Right cardiac atrium (tissue), 5 donors: ENCODE measurements at regions of chr6 and their contacts with region 1.

Region 1: GRCh38 chr6:137271245-137272183 is 52.3 kb upstream of the IFNGR1 start:
- DNase-seq: no peak
- ATAC-seq: peak; percentile 68 to 74
- H3K4me3 ChIP-seq: no peak overlapping the region
- H3K27ac ChIP-seq: no peak overlapping the region
- H3K4me1 ChIP-seq: no peaks in the 10 kb centered on the region
- H3K27me3 ChIP-seq: no peaks in the 10 kb centered on the region

Region 2: GRCh38 chr6:136051140-136051775 is 1220.3 kb before region 1 on chr6:
- intact Hi-C with region 1: no loop called
- DNase-seq: peak in 2 of 3 donors; percentile 19 to 58
- ATAC-seq: peak; percentile 59 to 84
- H3K4me3 ChIP-seq: peak overlapping the region; percentile 34
- H3K27ac ChIP-seq: peak overlapping the region; percentile 36
- H3K4me1 ChIP-seq: peaks cover 8% of the 10 kb centered on the region
- H3K27me3 ChIP-seq: no peaks in the 10 kb centered on the region

Region 3: GRCh38 chr6:137313928-137314855 is 42.7 kb after region 1 on chr6:
- intact Hi-C with region 1: loop called in 2 of 4 experiments (anchors 5 kb)
- DNase-seq: peak; percentile 76 to 91 (median 82)
- ATAC-seq: peak; percentile 88 to 95
- H3K4me3 ChIP-seq: peak overlapping the region; percentile 52
- H3K27ac ChIP-seq: no peak overlapping the region
- H3K4me1 ChIP-seq: peaks cover 5% of the 10 kb centered on the region
- H3K27me3 ChIP-seq: no peaks in the 10 kb centered on the region

Region 4: DNA sequence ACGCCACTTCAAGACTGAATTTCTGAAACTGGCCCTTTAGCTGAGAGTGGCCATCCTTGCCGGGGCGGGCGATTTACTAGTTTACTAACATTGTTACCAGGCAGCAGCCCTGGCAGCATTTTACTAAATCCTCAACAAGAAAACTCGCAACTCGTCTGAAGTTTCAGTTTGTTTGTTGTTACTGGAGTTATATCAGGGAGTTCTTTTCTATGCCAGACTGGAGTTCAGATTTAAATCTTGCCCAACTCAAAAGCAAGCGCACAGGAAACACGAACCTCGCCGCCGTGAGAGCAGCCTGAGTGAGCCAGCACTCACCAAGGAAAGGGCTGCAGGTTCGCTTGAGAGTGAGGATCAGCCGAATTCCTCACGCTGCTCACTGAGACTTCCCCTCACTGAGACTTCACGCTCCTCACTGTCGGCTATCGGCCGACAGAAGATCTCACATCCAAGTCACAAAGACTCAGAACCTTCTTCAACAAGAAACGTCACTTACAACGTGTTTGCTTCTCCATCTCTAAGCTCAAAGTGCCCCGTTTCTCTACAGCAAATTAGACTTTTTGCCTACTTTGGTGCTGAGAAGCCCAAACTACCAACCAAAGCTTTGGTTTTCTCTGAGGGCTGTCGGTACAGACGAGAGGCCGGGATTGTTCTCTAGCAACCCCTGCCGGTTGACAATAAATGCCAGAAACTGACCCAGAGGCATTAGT is 143.8 kb after region 1 on chr6:
- intact Hi-C with region 1: loop called in 1 of 4 experiments (anchors 10 kb)
- DNase-seq: peak; percentile 55 to 82 (median 65)
- ATAC-seq: peak; percentile 91 to 92
- H3K4me3 ChIP-seq: peak overlapping the region; percentile 76
- H3K27ac ChIP-seq: peak overlapping the region; percentile 3
- H3K4me1 ChIP-seq: no peaks in the 10 kb centered on the region
- H3K27me3 ChIP-seq: no peaks in the 10 kb centered on the region

Region 5: DNA sequence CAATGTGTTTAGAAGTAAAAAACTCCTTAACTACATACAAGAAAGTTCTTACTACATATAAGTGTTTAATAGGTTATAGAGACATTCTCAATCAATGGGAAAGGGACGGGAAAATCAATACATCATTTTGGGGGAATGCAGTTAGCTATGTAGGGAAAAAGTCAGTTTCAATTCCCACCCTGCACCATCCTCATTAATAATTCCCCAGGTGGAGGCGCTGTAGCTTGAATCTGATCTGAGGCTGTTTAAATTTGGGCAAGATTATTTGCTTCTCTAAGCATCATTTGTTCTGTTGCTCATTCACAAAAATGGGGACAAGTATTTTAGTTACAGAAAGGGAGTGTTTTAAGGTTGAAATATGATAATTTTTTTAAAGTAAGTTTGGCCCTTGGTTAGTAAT is 203.6 kb after region 1 on chr6:
- intact Hi-C with region 1: no loop called
- DNase-seq: no peak
- ATAC-seq: no peak
- H3K4me3 ChIP-seq: no peak overlapping the region
- H3K27ac ChIP-seq: no peak overlapping the region
- H3K4me1 ChIP-seq: no peaks in the 10 kb centered on the region
- H3K27me3 ChIP-seq: peaks cover 5% of the 10 kb centered on the region